Common myeloid progenitor, CD34-positive (primary cell): ENCODE measurements at regions of chr7 and their contacts with region 1.

Region 1: DNA sequence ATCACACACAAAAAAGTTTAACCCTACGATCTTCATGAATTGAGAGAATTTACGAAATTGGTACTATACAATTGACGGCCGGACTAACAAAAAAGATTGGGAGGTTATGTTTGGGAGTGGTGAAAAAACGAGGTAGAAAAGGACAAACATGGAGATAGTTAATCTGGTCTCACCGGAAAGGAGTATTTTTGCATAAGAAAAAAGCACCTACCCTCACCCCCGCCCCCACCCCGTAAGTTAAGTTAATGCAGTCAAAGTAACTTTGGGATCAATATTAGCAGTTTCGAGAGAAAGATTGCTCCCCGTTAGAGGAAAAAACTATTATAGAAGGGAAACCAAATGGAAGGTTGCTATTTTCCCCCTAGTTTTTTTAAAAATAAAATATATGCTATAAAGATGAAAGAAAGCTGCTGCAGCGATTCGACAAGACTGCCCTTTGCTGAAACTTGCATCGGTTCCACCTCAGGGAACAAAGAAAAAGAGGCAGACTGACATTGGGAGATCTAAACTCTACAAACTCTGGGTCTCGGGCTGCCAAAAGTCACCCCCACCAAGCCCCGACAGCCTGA is 3.5 kb downstream of the SP8 start:
- DNase-seq: no peak
- H3K4me3 ChIP-seq: peak overlapping the region in 1 of 7 experiments; percentile 65
- H3K27ac ChIP-seq: no peak overlapping the region
- H3K4me1 ChIP-seq: peaks cover 0 to 37% (median 33%) of the 10 kb centered on the region in 4 experiments
- H3K27me3 ChIP-seq: peaks cover 32 to 100% (median 57%) of the 10 kb centered on the region in 5 experiments

Region 2: GRCh38 chr7:20602306-20602705 is 180.9 kb before region 1 on chr7:
- CTCF ChIA-PET with region 1: no interaction called
- POLR2A ChIA-PET with region 1: no interaction called
- DNase-seq: no peak
- H3K4me3 ChIP-seq: no peak overlapping the region
- H3K27ac ChIP-seq: no peak overlapping the region
- H3K4me1 ChIP-seq: peaks cover 2 to 25% (median 16%) of the 10 kb centered on the region in 4 experiments
- H3K27me3 ChIP-seq: no peaks in the 10 kb centered on the region

Region 3: GRCh38 chr7:20798081-20798693 is 15.0 kb after region 1 on chr7:
- CTCF ChIA-PET with region 1: interaction called, 37 read pairs
- POLR2A ChIA-PET with region 1: no interaction called
- DNase-seq: peak in 1 of 3 donors; percentile 38
- H3K4me3 ChIP-seq: peak overlapping the region in 5 of 7 experiments; percentile 40 to 73 (median 48)
- H3K27ac ChIP-seq: no peak overlapping the region
- H3K4me1 ChIP-seq: peaks cover 0 to 15% (median 11%) of the 10 kb centered on the region in 4 experiments
- H3K27me3 ChIP-seq: peaks cover 41 to 84% (median 56%) of the 10 kb centered on the region in 5 experiments